Activated T-helper 1 cell treated with anti-CD3 and anti-CD28 coated beads, Interleukin-12 subunit alpha, Interleukin-12 subunit beta, Interleukin-2, Interleukin-4 antibody, amounts not matched to agents 30 ng/mL and 10 ng/mL and 1 ng/mL, durations not matched to agents 14 hours and 24 hours and 36 hours (primary cell): ENCODE measurements at regions of chr7 and their contacts with region 1.

Region 1: DNA sequence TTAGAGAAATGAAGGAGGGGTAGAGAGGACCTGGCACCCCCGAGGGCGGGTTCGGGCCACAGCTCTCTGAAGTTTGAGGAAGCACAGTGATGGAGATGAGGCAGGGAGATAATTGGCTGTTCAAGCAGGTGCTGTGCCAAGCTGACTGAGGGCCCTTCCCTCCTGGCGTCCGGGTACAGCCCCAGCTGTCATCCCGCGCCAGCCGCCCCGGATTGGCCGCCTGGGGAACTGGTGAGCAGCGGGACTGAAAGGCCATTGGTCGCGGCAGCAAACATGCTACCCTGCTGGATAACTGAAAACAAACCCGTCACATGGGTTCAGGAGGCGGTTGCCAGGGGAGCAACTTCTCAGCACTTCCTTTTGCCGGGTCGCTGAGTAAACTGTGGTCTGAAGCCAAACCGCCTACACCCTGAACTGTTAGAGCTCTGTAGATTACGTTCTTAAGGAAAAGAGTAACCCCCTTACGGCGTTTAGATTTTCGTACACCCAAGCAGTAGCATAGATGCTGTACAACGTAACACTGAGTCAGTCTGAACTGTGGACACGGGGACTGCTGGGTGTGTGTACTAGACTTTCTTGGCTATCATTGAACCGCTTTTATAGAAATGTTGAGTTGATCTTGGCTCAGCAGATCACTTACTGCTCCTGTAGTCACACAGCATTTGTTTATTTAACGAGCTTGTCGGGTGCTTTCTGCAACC is 1.3 kb downstream of the INSIG1 start:
- DNase-seq: peak; percentile 96
- H3K4me3 Mint-ChIP-seq: peak overlapping the region; percentile 91
- H3K27ac Mint-ChIP-seq: peak overlapping the region; percentile 97
- H3K4me1 Mint-ChIP-seq: peaks cover 46% of the 10 kb centered on the region
- H3K27me3 Mint-ChIP-seq: no peaks in the 10 kb centered on the region

Region 2: DNA sequence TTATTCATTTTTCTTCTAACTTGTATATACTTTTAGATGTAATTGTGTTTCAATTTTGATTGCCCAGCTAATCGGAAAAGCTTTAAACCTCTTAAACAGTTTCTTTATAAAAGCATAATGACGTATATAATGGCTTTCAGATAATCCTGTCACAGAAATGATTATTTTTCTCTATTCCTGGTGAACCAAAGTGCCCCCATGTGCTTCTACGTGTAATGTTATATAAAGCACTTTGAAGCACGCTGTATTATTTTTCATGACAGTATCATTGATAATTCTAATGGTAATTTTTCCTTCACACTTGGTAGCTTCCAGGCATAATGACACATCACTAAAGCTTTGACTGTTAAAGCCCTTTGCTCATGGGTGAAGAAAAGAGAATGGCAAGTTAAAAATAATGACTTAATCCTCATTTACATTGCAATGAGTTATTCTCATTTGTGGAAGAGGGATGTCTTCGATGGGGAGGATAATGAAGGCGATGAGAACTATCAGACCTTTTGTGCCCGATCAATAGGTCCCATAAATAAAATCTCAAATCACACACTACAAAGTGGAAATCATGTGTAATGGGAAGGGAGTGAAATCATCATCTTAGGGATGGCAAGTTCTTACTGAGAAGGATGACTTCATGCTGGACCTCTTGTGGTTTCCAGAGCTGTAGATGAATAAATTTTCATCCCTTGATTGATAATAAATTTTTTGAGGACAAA is 786.7 kb before region 1 on chr7:
- intact Hi-C with region 1: no loop called
- DNase-seq: no peak
- H3K4me3 Mint-ChIP-seq: no peak overlapping the region
- H3K27ac Mint-ChIP-seq: no peak overlapping the region
- H3K4me1 Mint-ChIP-seq: no peaks in the 10 kb centered on the region
- H3K27me3 Mint-ChIP-seq: no peaks in the 10 kb centered on the region

Region 3: GRCh38 chr7:155003376-155004214 is 295.4 kb before region 1 on chr7:
- intact Hi-C with region 1: loop called (anchors 1 kb)
- DNase-seq: peak; percentile 78
- H3K4me3 Mint-ChIP-seq: peak overlapping the region; percentile 95
- H3K27ac Mint-ChIP-seq: peak overlapping the region; percentile 94
- H3K4me1 Mint-ChIP-seq: peaks cover 6% of the 10 kb centered on the region
- H3K27me3 Mint-ChIP-seq: peaks cover 1% of the 10 kb centered on the region

Region 4: GRCh38 chr7:155205368-155206317 is 93.3 kb before region 1 on chr7:
- intact Hi-C with region 1: loop called (anchors 1 kb)
- DNase-seq: peak; percentile 86
- H3K4me3 Mint-ChIP-seq: peak overlapping the region; percentile 84
- H3K27ac Mint-ChIP-seq: peak overlapping the region; percentile 99
- H3K4me1 Mint-ChIP-seq: peaks cover 31% of the 10 kb centered on the region
- H3K27me3 Mint-ChIP-seq: no peaks in the 10 kb centered on the region

Region 5: DNA sequence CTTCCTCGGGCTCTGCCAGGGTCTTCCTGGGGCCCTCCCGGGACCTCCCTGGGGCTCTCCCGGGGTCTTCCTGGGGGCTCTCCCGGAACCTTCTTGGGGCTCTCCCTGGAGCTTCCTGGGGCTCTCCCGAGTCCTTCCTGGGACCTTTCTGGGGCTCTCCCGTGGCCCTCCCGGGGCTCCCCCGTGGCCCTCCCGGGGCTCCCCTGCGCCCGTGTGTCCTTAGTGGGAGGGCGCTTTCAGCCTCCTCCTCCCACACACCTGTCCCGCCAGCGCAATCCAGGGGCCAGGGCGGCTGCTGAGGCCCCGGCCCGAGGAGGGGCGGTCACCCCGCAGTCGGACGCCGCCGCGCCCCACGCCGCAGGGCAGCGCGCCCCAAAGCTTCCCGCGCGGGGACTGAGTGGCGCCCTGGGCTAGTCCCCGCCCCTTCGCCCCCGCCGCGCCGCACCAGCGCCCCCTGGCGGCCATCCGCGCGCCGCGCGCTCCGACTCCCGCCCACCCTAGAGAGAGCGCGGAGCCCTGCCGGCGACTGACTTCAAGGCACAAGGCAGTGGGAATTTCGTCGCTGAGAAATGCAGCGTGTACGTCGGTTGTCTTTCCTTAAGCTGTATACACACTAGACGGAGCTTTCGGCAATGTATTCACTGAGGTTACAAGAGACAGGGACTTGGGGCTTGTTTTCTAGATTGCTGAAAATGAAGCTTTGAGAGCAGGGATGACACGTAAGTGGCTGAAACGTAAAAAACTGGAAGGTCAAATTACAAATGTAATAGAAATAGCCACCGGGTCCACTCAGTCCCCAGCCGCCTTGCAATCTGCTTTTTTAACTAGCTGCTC is 45.8 kb after region 1 on chr7:
- intact Hi-C with region 1: loop called (anchors 1 kb)
- DNase-seq: peak; percentile 73
- H3K4me3 Mint-ChIP-seq: peak overlapping the region; percentile 35
- H3K27ac Mint-ChIP-seq: no peak overlapping the region
- H3K4me1 Mint-ChIP-seq: peaks cover 7% of the 10 kb centered on the region
- H3K27me3 Mint-ChIP-seq: peaks cover 15% of the 10 kb centered on the region

Region 6: DNA sequence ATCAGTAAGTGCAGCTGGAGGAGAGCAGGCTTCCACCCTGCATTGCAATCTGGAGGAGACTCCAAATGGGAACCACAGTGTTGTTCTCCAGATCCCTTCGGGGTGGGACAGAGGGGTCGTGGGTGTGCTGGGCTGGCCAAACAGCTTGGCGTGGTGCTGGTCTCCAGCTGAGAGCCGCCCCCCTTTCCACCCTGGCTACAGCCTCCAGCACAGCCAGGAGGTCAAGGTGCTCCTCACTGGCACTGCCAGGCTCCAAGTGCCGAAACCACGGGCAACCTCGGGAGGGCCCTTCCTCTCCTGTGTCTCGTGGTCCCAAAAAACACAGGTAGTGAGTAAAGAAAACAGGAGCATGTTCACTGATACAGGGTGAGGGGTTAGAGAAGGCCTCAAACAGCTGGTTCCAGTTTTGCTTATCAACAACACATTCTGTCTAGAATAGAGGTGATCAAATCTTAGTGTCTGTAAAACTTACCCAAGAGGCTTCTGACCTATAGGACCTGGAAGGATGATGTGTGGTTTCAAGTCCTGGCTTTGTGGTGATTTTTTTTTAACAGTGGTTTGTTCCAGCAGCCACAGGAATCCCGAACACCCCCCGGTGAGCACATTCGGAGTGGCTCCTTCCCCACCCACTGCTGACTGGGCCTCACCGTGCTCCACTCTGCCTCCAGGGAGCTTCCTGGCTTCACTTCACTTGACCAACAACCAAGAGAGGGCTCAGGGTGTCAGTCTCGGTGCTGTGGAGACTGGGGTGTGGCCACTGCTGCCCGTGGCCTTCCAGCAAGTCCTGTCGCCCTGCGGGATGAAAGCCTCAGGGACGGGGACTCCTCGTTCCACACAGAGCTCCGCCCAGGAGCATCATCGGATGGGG is 127.8 kb after region 1 on chr7:
- intact Hi-C with region 1: no loop called
- DNase-seq: no peak
- H3K4me3 Mint-ChIP-seq: no peak overlapping the region
- H3K27ac Mint-ChIP-seq: no peak overlapping the region
- H3K4me1 Mint-ChIP-seq: no peaks in the 10 kb centered on the region
- H3K27me3 Mint-ChIP-seq: peaks cover 12% of the 10 kb centered on the region

Region 7: DNA sequence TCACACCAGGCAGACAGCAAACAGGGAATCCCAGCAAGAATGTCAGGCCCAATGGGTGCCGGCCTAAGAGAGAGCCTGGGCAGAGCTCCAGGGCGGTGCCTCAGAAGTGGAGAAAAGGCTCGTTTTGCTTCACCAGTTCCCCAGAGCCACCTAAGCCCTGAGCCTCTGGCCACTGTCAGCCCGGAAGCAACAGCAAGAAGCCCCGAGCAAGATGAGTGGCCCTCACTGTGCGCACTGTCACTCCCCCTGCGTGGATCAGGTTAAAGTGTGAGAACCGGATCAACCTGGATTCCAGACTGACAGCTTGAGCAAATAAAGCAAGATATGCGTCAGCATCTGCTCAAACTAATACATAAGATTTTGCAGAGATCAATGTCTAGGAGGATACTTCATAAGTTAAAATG is 232.7 kb after region 1 on chr7:
- intact Hi-C with region 1: no loop called
- DNase-seq: no peak
- H3K4me3 Mint-ChIP-seq: no peak overlapping the region
- H3K27ac Mint-ChIP-seq: no peak overlapping the region
- H3K4me1 Mint-ChIP-seq: peaks cover 11% of the 10 kb centered on the region
- H3K27me3 Mint-ChIP-seq: peaks cover 63% of the 10 kb centered on the region

Region 8: GRCh38 chr7:155763691-155764437 is 464.9 kb after region 1 on chr7:
- intact Hi-C with region 1: loop called (anchors 1 kb)
- DNase-seq: peak; percentile 65
- H3K4me3 Mint-ChIP-seq: peak overlapping the region; percentile 85
- H3K27ac Mint-ChIP-seq: peak overlapping the region; percentile 100
- H3K4me1 Mint-ChIP-seq: peaks cover 66% of the 10 kb centered on the region
- H3K27me3 Mint-ChIP-seq: no peaks in the 10 kb centered on the region

Region 9: GRCh38 chr7:157138424-157139110 is 1839.6 kb after region 1 on chr7 and contains the start of gene UBE3C:
- intact Hi-C with region 1: loop called (anchors 5 kb)
- DNase-seq: peak; percentile 89
- H3K4me3 Mint-ChIP-seq: peak within 1 kb of the TSS; percentile 88
- H3K27ac Mint-ChIP-seq: peak within 1 kb of the TSS; percentile 97
- H3K4me1 Mint-ChIP-seq: peaks cover 41% of the 10 kb centered on the region
- H3K27me3 Mint-ChIP-seq: no peaks in the 10 kb centered on the region
- total RNA-seq, gene UBE3C: 91.5 and 95.8 TPM in 2 replicates